Pancreas (tissue), 10 donors: ENCODE measurements at regions of chr17 and their contacts with region 1.

Region 1: DNA sequence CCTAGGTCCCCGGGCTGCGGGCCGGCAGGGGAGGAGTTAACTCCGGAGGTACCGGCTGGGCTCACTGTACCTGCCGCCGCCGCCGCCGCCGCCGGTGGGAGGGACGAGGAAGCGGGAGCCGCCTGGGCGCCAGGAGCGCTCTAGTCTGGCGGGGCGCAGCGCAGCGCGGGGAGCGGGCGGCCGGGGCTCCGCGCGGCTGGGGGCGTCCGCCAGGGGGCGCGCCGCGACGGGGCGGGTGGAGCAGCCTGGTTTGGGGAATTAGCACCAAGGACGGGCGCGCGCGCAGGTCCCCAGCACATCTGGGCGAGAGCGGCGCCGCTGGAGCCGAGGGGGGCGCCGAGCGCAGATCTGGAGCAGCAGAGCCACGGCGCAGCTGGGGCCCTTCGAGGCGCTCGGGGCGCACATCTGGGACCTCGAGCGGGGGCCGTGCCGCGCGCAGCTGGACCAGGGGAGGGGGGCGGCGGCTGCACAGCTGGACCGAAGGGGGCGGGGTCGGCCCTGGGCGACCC is at the start of gene NXPH3:
- DNase-seq: peak in 5 of 6 donors; percentile 44 to 87 (median 61)
- ATAC-seq: peak; percentile 47 to 81 (median 73)
- H3K4me3 ChIP-seq: peak within 1 kb of the TSS; percentile 12 to 51 (median 24)
- H3K27ac ChIP-seq: no peak within 1 kb of the TSS
- H3K4me1 ChIP-seq: peaks cover 0 to 5% (median 0%) of the 10 kb centered on the region in 3 donors
- H3K27me3 ChIP-seq: no peaks in the 10 kb centered on the region
- CTCF ChIP-seq: peak in 2 of 4 donors; percentile 13 to 29
- total RNA-seq, gene NXPH3: 0.19 to 0.62 (median 0.23) TPM

Region 2: GRCh38 chr17:49624896-49625295 is 49.3 kb after region 1 on chr17:
- intact Hi-C with region 1: loop called in 1 of 3 experiments (anchors 5 kb)
- DNase-seq: no peak
- ATAC-seq: no peak
- H3K4me3 ChIP-seq: no peak overlapping the region
- H3K27ac ChIP-seq: no peak overlapping the region
- H3K4me1 ChIP-seq: peaks cover 0 to 9% (median 7%) of the 10 kb centered on the region in 3 donors
- H3K27me3 ChIP-seq: no peaks in the 10 kb centered on the region
- CTCF ChIP-seq: no peak

Region 3: DNA sequence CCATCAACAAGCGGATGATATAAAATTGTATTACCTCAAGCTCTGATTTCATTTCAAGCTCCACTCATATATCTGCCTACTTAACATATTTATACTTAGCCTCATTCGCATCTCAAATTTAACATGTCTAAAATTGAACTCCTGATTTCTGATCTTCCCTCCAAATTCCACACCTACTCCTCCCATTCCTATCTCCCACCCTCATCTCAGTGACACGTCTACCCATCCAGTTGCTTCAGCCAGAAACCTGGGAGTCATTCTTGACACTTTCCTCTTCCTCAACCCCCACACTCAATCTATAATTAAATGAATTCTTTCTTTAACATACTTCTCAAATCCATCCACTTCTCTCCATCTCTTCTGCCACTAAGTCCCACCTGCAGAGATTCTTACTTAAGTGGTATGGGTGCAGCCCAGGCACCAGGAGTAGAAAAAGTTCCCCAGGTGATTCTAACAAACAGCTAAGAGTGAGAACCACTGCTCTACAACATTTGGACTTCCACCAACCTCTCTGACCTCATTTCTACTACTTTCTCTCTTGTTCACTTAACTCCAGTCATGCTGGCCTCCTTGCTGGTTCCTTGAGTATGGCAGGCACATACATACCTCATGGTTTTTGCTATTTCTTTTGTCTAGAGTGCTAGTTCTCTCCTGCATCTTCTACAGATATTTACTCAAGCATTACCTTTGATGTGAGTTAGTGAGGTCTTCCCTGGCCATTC is 84.2 kb after region 1 on chr17:
- intact Hi-C with region 1: no loop called
- DNase-seq: no peak
- ATAC-seq: no peak
- H3K4me3 ChIP-seq: no peak overlapping the region
- H3K27ac ChIP-seq: no peak overlapping the region
- H3K4me1 ChIP-seq: peaks cover 0 to 13% (median 7%) of the 10 kb centered on the region in 3 donors
- H3K27me3 ChIP-seq: no peaks in the 10 kb centered on the region
- CTCF ChIP-seq: no peak

Region 4: DNA sequence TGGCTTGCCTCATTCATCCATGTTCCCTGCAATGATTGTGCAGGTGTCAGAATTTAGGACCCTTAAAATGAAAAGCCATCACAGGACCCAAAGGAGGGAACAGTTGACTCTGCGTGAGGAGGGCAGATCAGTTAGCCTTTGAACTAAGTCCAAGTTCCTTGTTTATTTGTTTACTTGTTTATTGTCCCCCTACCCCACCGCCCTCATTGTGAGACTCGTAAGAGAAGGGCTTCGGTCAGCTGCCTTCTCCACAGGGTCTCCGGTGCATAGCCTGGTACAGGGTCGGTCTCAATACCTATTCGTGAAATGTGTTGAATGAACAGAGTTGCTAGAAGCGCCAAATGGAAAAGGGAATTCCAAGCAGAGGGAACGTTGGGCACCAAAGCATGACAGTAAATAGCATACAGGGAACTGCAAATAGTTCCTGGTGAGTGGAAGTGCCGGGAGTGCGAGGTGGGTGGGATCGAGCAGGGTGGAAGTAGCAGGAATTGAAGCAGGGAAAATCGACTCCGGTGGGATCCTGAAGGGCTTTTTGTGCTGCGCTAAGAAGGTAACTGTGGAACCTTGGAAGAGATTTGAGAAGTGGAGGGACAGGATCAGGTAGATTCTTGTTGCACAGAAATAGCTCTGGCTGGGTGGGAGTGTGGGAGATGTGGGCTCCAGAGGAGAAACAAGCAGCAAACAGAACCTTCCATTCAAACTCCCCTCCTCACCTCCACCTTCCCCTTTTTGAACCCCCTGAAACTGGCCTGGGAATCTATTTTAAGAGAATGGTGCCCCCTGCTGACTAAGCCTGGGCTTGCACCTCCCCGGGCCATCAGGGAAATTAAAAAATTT is 119.4 kb after region 1 on chr17:
- intact Hi-C with region 1: loop called (anchors 5 kb)
- DNase-seq: peak in 4 of 6 donors; percentile 32 to 83 (median 56)
- ATAC-seq: peak; percentile 59 to 87 (median 80)
- H3K4me3 ChIP-seq: no peak overlapping the region
- H3K27ac ChIP-seq: no peak overlapping the region
- H3K4me1 ChIP-seq: no peaks in the 10 kb centered on the region
- H3K27me3 ChIP-seq: no peaks in the 10 kb centered on the region
- CTCF ChIP-seq: peak; percentile 71 to 89 (median 85)

Region 5: DNA sequence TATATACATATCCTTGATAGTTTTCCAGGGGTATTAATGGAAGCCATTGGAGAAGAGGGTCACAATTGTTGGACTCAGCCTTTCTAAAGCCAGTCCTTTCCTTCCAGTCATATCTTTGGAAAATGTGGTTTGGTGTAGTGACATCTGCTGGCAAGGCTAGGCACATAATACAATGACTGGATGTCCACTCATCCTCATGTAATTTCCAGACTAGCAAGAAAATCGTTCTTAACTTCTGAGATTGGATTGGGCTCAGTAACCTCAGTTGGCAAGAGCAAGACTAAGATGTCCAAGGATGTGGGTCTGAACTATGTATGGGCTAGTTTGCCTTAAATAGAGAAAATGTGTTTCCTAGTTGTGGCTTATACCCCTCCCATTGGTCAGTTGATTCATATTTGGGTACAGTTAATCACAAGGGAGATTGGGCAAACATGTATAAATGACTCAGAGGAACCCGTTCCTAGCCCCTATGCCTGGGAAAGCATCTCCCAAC is 204.2 kb after region 1 on chr17:
- intact Hi-C with region 1: loop called in 2 of 3 experiments (anchors 5 to 10 kb)
- DNase-seq: peak in 2 of 6 donors; percentile 23 to 43
- ATAC-seq: peak; percentile 68 to 93 (median 89)
- H3K4me3 ChIP-seq: no peak overlapping the region
- H3K27ac ChIP-seq: no peak overlapping the region
- H3K4me1 ChIP-seq: no peaks in the 10 kb centered on the region
- H3K27me3 ChIP-seq: no peaks in the 10 kb centered on the region
- CTCF ChIP-seq: peak in 3 of 4 donors; percentile 10 to 28 (median 18)

Region 6: DNA sequence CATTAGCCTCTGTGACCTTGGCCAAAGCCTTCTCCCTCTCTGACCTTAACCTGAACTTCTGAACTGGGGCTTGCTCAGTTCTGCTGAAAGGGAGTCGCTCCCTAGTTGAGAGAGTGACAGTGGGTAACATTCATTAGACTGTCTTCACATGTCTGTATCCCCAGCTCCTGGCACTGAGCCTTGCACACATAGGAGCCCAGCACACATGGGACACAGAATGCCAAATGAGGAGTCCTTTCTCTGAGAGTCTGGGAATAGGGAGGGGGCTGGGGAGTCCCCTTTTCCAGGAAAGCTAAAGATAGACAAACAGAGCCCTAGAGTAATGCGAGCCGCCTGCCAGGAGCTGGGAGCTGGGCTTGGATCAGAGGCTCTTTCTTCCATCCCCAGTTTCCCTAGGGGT is 269.7 kb after region 1 on chr17:
- intact Hi-C with region 1: loop called in 1 of 3 experiments (anchors 5 kb)
- DNase-seq: no peak
- ATAC-seq: no peak
- H3K4me3 ChIP-seq: no peak overlapping the region
- H3K27ac ChIP-seq: no peak overlapping the region
- H3K4me1 ChIP-seq: no peaks in the 10 kb centered on the region
- H3K27me3 ChIP-seq: no peaks in the 10 kb centered on the region
- CTCF ChIP-seq: no peak